ENCODE measurements at regions of chr16 and their contacts with region 1.

Region 1: GRCh38 chr16:23795378-23795777 is 40.4 kb upstream of the PRKCB start:
- DNase-seq: no peak
- H3K4me3 ChIP-seq: no peak overlapping the region
- H3K27ac ChIP-seq: no peak overlapping the region
- H3K4me1 ChIP-seq: no peaks in the 10 kb centered on the region
- H3K27me3 ChIP-seq: no peaks in the 10 kb centered on the region
- CTCF ChIP-seq: no peak

Region 2: DNA sequence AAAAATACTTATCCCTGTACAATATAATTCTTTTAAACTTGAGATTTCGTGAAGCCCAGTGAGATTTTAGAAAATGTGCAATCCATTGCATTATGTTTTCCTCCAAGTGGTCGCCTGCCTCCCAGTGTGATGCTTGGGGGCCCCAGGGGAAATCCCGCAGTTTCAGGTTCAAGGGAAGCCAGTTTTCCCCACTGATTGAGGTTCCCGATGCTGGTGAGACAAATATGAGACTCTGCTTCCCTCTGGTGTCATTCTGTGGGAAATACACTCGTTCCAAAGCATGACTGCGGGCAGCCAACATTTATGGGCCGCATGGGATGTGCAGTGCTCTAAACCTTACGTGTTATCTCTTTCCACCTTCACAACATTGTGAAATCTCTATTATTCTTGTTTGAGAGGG is 241.2 kb after region 1 on chr16:
- intact Hi-C with region 1: loop called (anchors 10 kb)
- DNase-seq: peak in 4 of 5 donors; percentile 53 to 70 (median 62)
- H3K4me3 ChIP-seq: no peak overlapping the region
- H3K27ac ChIP-seq: no peak overlapping the region
- H3K4me1 ChIP-seq: no peaks in the 10 kb centered on the region
- H3K27me3 ChIP-seq: no peaks in the 10 kb centered on the region
- CTCF ChIP-seq: peak; percentile 82